Left ventricle myocardium inferior (tissue), 1 donor: ENCODE measurements at regions of chr17 and their contacts with region 1.

Region 1: DNA sequence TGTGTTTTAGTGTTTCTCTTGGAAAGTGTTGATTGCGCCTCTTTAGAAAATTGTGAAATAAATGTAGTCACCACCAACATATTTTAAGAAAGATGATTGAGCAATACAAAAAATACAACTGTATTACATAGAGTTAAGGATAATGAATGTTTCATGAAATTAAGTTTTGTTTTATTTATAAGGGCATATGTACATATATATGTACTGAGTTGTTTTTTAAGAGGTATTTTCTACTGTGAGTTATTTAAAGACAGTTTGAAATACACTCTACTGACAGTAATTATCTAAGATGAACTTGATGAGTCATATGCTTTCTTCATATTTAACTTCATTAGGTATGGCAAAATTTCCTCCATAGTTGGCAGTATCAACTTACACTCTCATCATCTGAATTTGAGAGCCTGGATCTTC is 411.7 kb downstream of the HS3ST3B1 start:
- DNase-seq: no peak
- H3K4me3 ChIP-seq: no peak overlapping the region
- H3K27ac ChIP-seq: no peak overlapping the region
- H3K4me1 ChIP-seq: no peaks in the 10 kb centered on the region
- H3K27me3 ChIP-seq: peaks cover 19% of the 10 kb centered on the region
- CTCF ChIP-seq: no peak

Region 2: GRCh38 chr17:14471052-14471451 is 241.6 kb before region 1 on chr17:
- intact Hi-C with region 1: loop called (anchors 10 kb)
- DNase-seq: no peak
- H3K4me3 ChIP-seq: no peak overlapping the region
- H3K27ac ChIP-seq: no peak overlapping the region
- H3K4me1 ChIP-seq: no peaks in the 10 kb centered on the region
- H3K27me3 ChIP-seq: peaks cover 6% of the 10 kb centered on the region
- CTCF ChIP-seq: no peak

Region 3: GRCh38 chr17:14784997-14785696 is 72.5 kb after region 1 on chr17:
- intact Hi-C with region 1: no loop called
- DNase-seq: no peak
- H3K4me3 ChIP-seq: no peak overlapping the region
- H3K27ac ChIP-seq: no peak overlapping the region
- H3K4me1 ChIP-seq: no peaks in the 10 kb centered on the region
- H3K27me3 ChIP-seq: peaks cover 28% of the 10 kb centered on the region
- CTCF ChIP-seq: no peak

Region 4: DNA sequence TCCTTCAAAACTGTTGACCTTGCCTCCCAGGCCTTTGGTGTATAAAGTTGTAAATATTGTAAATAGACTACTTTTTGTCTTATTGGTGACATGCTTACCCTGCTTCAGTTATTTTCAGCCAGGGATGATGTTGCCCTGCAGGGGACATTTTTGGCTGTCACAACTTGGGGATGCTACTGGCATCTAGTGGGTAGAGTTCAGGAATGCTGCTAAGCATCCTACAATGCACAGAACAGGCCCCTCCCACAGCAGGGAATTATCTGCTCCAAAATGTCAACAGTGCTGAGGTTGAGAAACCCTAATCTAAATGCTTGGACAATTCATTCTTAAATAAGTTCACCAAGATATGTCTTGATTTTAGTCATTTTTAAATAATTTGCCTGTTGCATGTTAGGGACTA is 92.7 kb after region 1 on chr17:
- intact Hi-C with region 1: no loop called
- DNase-seq: no peak
- H3K4me3 ChIP-seq: no peak overlapping the region
- H3K27ac ChIP-seq: no peak overlapping the region
- H3K4me1 ChIP-seq: no peaks in the 10 kb centered on the region
- H3K27me3 ChIP-seq: no peaks in the 10 kb centered on the region
- CTCF ChIP-seq: no peak